ENCODE measurements at regions of chr9 and their contacts with region 1.

Region 1: GRCh38 chr9:69425136-69425798 is 100.3 kb downstream of the ENTREP1 start:
- DNase-seq: no peak
- ATAC-seq: no peak

Region 2: DNA sequence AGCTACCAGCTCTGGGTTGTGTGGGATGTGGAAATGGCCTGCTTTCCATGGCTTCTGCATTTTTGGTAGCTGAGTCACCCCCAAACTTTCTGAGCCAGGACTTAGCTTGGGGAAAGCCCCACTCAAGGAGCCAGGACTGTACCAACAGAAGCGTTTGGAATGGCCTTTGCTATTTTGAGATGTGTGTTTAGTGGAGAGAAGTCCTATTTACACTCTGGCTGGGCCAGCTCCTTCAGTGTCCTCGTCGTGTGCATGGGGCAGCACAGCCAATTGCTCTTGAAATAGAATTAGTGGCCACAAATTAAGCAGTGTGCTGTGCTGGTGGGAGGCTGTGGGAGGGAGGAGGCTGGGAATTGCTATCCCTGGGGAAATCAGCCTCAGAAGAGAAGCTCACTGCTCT is 48.6 kb before region 1 on chr9:
- intact Hi-C with region 1: no loop called
- DNase-seq: no peak
- ATAC-seq: peak; percentile 82

Region 3: GRCh38 chr9:69513141-69513820 is 88.0 kb after region 1 on chr9:
- intact Hi-C with region 1: no loop called
- DNase-seq: no peak
- ATAC-seq: no peak

Region 4: DNA sequence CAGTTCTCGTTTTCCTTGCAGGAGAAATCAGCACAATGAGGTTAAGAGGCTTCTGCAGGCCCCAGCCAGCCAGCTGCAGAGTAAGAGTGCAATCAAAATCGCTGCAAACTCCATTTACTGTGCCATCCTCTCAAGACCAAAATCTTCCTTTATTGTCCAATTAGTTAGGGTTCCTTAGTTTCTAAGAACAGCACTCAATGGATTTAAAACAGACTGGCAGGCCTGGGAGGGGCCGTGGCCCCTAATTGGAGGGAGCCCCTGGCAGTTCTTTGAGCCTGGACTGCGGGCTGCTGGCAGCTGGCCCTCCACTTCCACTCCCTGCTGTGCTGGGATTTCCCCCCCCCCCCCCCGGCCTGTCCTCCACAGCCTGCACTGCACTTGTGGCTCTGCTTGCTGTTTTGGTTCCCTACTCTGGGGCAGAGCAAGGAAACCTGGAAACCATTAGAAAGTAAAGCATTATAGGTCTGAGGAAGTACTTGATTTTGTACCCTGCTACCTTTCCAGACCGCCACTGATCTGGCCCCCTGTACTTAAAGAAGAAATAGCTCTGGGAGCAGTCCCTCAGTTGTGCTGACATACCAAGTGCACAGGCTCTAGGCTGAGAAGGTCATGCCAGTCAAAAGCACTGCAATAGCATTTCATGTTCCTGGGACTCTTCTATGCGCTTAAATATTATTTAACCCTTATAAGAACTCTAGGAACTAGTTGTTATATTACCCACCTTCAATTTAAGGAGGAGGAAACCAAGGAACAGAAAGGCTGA is 117.9 kb after region 1 on chr9:
- intact Hi-C with region 1: loop called (anchors 5 kb)
- DNase-seq: no peak
- ATAC-seq: peak; percentile 86